Activated T-helper 2 cell treated with anti-CD3 and anti-CD28 coated beads, Interferon-gamma antibody, Interleukin-2, Interleukin-4, amounts not matched to agents 10 μg/mL and 5 μg/mL and 100 μg/mL, durations not matched to agents 14 hours and 24 hours and 36 hours (primary cell): ENCODE measurements at regions of chr14 and their contacts with region 1.

Region 1: GRCh38 chr14:21414137-21414631 is 30.4 kb upstream of the SUPT16H start:
- DNase-seq: no peak
- H3K4me3 Mint-ChIP-seq: no peak overlapping the region
- H3K27ac Mint-ChIP-seq: peak overlapping the region; percentile 91
- H3K4me1 Mint-ChIP-seq: peaks cover 26% of the 10 kb centered on the region
- H3K27me3 Mint-ChIP-seq: no peaks in the 10 kb centered on the region

Region 2: DNA sequence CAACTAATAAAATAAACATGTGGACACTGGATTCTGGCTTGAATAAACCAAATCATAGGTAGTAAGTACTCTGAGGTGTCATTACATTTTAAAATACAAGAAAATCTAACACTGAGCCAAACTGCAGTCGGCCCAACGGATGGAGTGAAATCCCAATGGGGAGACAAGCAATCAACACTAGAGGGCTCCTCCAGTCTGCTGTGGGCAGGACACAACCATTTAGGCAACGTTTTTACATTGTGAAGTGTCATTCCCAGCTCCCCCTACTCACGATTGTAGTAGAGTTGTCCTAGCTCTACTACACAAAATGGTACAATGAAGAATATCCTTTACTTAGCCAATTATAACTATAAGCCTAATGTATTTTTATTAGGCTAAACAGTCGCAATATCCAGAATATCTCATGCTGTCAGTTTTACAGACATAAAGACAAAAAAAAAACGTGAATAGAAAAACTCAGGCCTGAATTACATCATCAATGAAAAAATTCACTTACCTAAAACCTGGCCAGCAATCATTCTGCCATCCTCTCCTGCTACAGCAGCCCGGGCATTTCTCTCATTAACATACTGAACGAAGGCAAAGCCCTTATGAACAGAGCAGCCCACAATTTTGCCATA is 180.6 kb before region 1 on chr14:
- intact Hi-C with region 1: no loop called
- DNase-seq: no peak
- H3K4me3 Mint-ChIP-seq: no peak overlapping the region
- H3K27ac Mint-ChIP-seq: peak overlapping the region; percentile 14
- H3K4me1 Mint-ChIP-seq: peaks cover 74% of the 10 kb centered on the region
- H3K27me3 Mint-ChIP-seq: no peaks in the 10 kb centered on the region

Region 3: GRCh38 chr14:21367582-21368144 is 46.5 kb before region 1 on chr14:
- intact Hi-C with region 1: loop called (anchors 10 kb)
- DNase-seq: no peak
- H3K4me3 Mint-ChIP-seq: no peak overlapping the region
- H3K27ac Mint-ChIP-seq: no peak overlapping the region
- H3K4me1 Mint-ChIP-seq: peaks cover 9% of the 10 kb centered on the region
- H3K27me3 Mint-ChIP-seq: no peaks in the 10 kb centered on the region

Region 4: DNA sequence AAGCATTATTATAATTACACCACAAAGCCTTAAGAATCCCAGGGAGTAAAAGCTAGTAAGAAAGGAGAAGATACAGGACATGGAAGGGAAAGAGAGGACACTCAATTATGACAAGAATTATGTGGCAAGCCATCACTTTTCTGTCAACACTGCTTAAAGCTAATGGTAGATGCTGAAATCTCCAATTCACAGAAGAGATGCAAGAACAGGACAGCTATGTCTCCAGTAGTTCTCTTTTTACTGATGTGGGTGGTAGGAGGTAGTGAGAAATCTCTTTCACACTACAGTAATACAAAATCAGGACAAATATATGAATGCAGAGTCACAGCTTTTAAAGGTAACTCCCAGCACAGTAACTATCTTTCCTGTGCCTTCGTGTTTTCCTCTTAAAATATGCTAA is 12.5 kb after region 1 on chr14:
- intact Hi-C with region 1: no loop called
- DNase-seq: no peak
- H3K4me3 Mint-ChIP-seq: no peak overlapping the region
- H3K27ac Mint-ChIP-seq: no peak overlapping the region
- H3K4me1 Mint-ChIP-seq: no peaks in the 10 kb centered on the region
- H3K27me3 Mint-ChIP-seq: no peaks in the 10 kb centered on the region

Region 5: GRCh38 chr14:21437063-21437901 is 23.1 kb after region 1 on chr14:
- intact Hi-C with region 1: loop called (anchors 2 kb)
- DNase-seq: peak; percentile 95
- H3K4me3 Mint-ChIP-seq: peak overlapping the region; percentile 88
- H3K27ac Mint-ChIP-seq: peak overlapping the region; percentile 79
- H3K4me1 Mint-ChIP-seq: peaks cover 54% of the 10 kb centered on the region
- H3K27me3 Mint-ChIP-seq: no peaks in the 10 kb centered on the region

Region 6: GRCh38 chr14:21476925-21477681 is 62.9 kb after region 1 on chr14 and contains the starts of genes RAB2B and TOX4:
- intact Hi-C with region 1: loop called (anchors 1 kb)
- DNase-seq: peak; percentile 97
- H3K4me3 Mint-ChIP-seq: peak within 1 kb of the TSS; percentile 99
- H3K27ac Mint-ChIP-seq: peak within 1 kb of the TSS; percentile 99
- H3K4me1 Mint-ChIP-seq: peaks cover 18% of the 10 kb centered on the region
- H3K27me3 Mint-ChIP-seq: no peaks in the 10 kb centered on the region
- total RNA-seq, gene RAB2B: 27.4 and 30.5 TPM in 2 replicates
- total RNA-seq, gene TOX4: 68.1 and 70.1 TPM in 2 replicates

Region 7: DNA sequence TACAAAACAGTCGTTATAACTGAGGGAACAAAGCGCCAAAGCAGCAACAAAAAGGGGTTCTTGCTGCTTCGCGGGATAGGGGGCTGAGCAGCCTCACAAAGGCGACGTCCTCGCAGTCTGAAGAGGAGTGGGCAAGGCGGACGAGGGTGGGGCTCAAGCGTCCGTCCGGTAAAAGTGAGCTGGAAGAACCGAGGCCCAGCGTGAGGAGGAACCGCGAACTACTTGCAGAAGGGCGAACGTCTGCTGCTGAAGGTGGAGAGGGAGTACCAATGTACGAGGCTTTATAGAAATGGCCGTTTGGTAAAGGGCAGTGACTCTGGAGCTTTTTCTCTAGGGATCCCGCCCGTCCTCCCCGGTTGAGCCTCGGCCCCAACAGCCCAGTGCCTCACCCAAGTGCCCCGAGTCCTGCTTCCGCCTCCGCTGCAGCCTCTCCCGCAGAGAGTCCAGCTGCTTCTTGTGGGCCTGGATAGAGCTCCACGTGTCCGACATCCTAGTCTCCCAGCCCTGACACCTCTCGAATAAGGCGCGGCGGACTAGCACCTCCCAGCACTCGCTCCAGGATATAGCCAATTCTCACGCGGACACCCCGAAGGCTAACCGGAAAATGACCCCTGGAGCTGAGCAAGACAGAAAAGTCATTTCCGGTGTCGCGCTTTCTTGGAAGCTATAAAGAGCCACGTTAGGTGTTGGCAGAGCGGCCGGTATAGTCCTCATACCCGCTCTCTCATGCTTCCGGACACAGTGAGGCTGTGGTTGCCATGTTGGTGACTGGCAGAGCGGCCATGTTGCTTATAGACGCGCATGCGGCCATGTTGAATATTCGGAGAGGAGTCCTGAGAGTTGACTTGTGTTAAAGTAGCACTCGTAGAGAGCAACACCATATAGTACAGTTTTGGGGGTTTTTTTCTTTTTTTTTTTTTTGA is 96.8 kb after region 1 on chr14 and contains the start of gene METTL3:
- intact Hi-C with region 1: loop called (anchors 1 kb)
- DNase-seq: peak; percentile 91
- H3K4me3 Mint-ChIP-seq: peak within 1 kb of the TSS; percentile 88
- H3K27ac Mint-ChIP-seq: peak within 1 kb of the TSS; percentile 97
- H3K4me1 Mint-ChIP-seq: peaks cover 28% of the 10 kb centered on the region
- H3K27me3 Mint-ChIP-seq: peaks cover 5% of the 10 kb centered on the region
- total RNA-seq, gene METTL3: 76.7 and 80.5 TPM in 2 replicates

Region 8: GRCh38 chr14:21557084-21557901 is 143.1 kb after region 1 on chr14:
- intact Hi-C with region 1: loop called (anchors 2 kb)
- DNase-seq: peak; percentile 55
- H3K4me3 Mint-ChIP-seq: no peak overlapping the region
- H3K27ac Mint-ChIP-seq: peak overlapping the region; percentile 19
- H3K4me1 Mint-ChIP-seq: peaks cover 4% of the 10 kb centered on the region
- H3K27me3 Mint-ChIP-seq: no peaks in the 10 kb centered on the region